ENCODE measurements at regions of chr7 and their contacts with region 1.

Region 1: GRCh38 chr7:33554046-33554445 is 351.3 kb upstream of the BMPER start:
- DNase-seq: no peak
- ATAC-seq: no peak
- H3K4me3 ChIP-seq: no peak overlapping the region
- H3K27ac ChIP-seq: no peak overlapping the region
- H3K4me1 ChIP-seq: peaks cover 47% of the 10 kb centered on the region
- H3K27me3 ChIP-seq: no peaks in the 10 kb centered on the region
- CTCF ChIP-seq: no peak

Region 2: DNA sequence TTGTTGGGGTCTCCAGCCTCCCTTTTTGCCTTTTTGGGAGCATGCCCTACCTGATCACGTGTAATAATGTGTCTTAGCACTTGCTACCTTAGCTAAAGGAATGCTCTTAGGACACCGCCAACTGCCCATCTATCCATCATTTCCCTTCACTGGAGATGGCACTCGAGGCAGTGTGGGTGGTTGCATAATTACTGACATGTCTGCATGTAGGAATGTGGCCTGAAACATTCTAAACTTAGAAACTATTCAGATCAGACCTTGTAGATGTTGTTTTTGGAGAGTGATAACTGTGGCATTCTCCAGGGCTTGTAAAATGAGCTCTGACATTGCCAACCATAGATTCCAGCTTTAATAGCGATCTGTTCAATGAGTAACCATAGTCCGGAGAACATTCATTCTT is 58.8 kb before region 1 on chr7:
- intact Hi-C with region 1: loop called in 1 of 2 experiments (anchors 10 kb)
- DNase-seq: no peak
- ATAC-seq: peak; percentile 69 to 91 (median 86)
- H3K4me3 ChIP-seq: no peak overlapping the region
- H3K27ac ChIP-seq: peak overlapping the region; percentile 51
- H3K4me1 ChIP-seq: peaks cover 42% of the 10 kb centered on the region
- H3K27me3 ChIP-seq: no peaks in the 10 kb centered on the region
- CTCF ChIP-seq: no peak

Region 3: DNA sequence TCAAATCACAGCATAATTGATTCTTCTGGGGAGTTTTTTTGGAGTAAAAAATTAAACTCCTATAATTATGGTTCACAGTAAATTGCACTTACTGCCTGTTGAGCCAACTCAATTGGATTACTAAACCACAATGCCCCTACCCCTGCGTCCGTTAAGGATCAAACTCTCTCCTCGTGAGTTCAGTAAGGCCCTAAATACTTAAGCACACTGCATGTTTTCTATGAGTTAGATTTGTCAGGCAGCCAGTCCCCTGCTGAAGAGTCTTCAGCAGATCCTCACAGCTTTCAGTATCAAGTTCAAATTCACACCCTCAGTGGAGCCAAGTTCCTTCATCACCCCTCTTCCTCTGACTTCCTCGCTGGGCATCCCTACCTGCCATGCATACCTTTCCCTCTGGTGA is 76.3 kb after region 1 on chr7:
- intact Hi-C with region 1: no loop called
- DNase-seq: no peak
- ATAC-seq: no peak
- H3K4me3 ChIP-seq: no peak overlapping the region
- H3K27ac ChIP-seq: no peak overlapping the region
- H3K4me1 ChIP-seq: no peaks in the 10 kb centered on the region
- H3K27me3 ChIP-seq: no peaks in the 10 kb centered on the region
- CTCF ChIP-seq: no peak